Gastrocnemius medialis (tissue), 4 donors: ENCODE measurements at regions of chr21 and their contacts with region 1.

Region 1: GRCh38 chr21:45363921-45364467 is 41.0 kb upstream of the COL18A1 start:
- DNase-seq: peak; percentile 66 to 71
- ATAC-seq: peak; percentile 90 to 94
- H3K4me3 ChIP-seq: peak overlapping the region in 3 of 4 donors; percentile 2 to 15 (median 13)
- H3K27ac ChIP-seq: peak overlapping the region; percentile 83 to 89 (median 84)
- H3K4me1 ChIP-seq: peaks cover 8 to 18% of the 10 kb centered on the region in 2 donors
- H3K27me3 ChIP-seq: peaks cover 0 to 11% (median 5%) of the 10 kb centered on the region in 3 donors
- CTCF ChIP-seq: no peak
- POLR2A ChIP-seq: peak; percentile 28 to 46

Region 2: DNA sequence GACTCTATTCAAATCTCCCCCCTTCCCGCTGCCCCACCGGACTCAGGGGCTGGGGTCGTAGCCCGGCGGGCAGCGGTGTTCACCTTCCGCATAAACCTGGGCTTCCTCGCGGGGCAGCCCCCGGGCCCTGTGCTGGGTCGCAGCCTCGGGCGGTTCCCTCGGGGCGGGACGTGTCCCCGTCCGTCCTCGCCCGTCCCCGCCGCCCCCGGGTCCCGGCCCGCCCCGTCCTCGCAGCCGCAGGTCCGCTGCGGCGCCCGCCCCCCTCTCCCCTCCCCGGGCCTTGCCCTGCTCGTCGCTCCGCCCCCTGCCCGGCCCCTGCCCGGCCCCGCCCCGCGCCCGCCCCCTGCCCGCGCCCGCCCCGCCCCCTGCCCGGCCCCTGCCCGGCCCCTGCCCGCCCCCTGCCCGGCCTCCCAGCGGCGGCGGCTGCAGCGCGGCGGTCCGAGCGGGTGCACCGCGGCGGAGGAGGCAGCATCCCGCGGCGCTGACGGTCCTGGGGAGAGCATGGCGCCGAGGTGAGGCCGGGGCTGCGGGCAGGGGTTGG is 40.8 kb after region 1 on chr21 and contains the start of gene COL18A1:
- in situ Hi-C with region 1: no loop called
- intact Hi-C with region 1: loop called (anchors 2 kb)
- DNase-seq: peak in 1 of 2 donors; percentile 11
- ATAC-seq: peak in 1 of 2 donors; percentile 31
- H3K4me3 ChIP-seq: peak within 1 kb of the TSS; percentile 45 to 63 (median 52)
- H3K27ac ChIP-seq: peak within 1 kb of the TSS; percentile 66 to 82 (median 72)
- H3K4me1 ChIP-seq: peaks cover under 1 to 24% of the 10 kb centered on the region in 2 donors
- H3K27me3 ChIP-seq: peaks cover 25 to 34% (median 29%) of the 10 kb centered on the region in 3 donors
- CTCF ChIP-seq: no peak
- POLR2A ChIP-seq: no peak
- total RNA-seq, gene COL18A1: 16.4 to 42.2 (median 20.7) TPM